SK-N-SH (cell line): ENCODE measurements at regions of chr2 and their contacts with region 1.

Region 1: GRCh38 chr2:11716689-11717321 is 29.6 kb upstream of the LPIN1 start:
- DNase-seq: no peak
- H3K4me3 ChIP-seq: no peak overlapping the region
- H3K27ac ChIP-seq: no peak overlapping the region
- H3K4me1 ChIP-seq: peaks cover 0 to 51% of the 10 kb centered on the region in 2 experiments; a peak in 2 of 4 replicates
- H3K27me3 ChIP-seq: peaks cover 23% of the 10 kb centered on the region; the same call in 1 of the 2 replicates
- CTCF ChIP-seq: no peak
- EP300 ChIP-seq: no peak
- RAD21 ChIP-seq: no peak

Region 2: DNA sequence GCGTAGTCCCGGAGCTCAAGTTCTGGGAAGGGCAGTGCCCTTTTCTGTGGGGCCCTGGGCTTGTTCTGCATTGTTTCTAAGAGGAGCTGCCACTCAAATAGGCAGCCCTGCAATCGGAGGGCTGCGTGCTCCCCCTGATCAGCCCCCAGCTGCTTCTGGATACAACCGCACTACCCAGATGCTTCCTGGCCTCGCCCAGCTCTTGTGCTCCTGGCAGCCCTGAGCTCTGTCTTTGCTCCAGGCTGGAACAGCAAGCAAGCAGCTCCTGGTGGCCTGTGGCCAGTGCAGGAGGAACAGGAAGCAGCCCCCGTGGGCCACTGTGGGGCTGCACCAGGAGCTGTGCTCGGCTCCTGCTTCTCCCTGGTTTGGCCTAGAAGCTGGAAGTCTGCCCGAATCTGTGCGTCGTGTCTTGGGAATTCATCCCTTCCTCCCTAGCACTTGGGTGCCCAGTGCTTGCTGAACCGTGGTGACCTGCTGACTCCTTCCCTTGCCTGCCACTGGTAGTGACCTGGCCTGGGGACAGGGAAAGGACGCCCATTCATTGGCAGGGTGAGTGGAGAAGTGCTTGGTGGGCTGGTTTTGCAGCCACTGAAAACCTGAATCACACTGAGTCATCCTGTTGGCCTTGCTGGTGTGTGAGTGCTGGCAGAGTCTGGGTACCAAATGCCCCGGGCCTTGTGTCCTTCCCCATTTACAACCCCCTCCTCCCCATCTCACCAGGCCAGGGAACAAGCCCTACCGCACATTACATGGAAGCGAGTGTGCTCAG is 19.5 kb before region 1 on chr2:
- CTCF ChIA-PET with region 1: interaction called, 130 read pairs
- POLR2A ChIA-PET with region 1: interaction called, 16 read pairs
- DNase-seq: peak; percentile 82
- H3K4me3 ChIP-seq: no peak overlapping the region
- H3K27ac ChIP-seq: peak overlapping the region; percentile 56 to 83
- H3K4me1 ChIP-seq: peaks cover 14 to 46% of the 10 kb centered on the region in 2 experiments; a peak in 3 of 4 replicates
- H3K27me3 ChIP-seq: no peaks in the 10 kb centered on the region
- CTCF ChIP-seq: no peak
- EP300 ChIP-seq: peak in 1 of 2 experiments; percentile 31; a peak in 1 of 4 replicates
- RAD21 ChIP-seq: no peak; the same call in 1 of the 2 replicates

Region 3: GRCh38 chr2:11703700-11704099 is 13.1 kb before region 1 on chr2:
- CTCF ChIA-PET with region 1: interaction called, 130 read pairs
- POLR2A ChIA-PET with region 1: interaction called, 7 read pairs
- DNase-seq: no peak
- H3K4me3 ChIP-seq: no peak overlapping the region
- H3K27ac ChIP-seq: no peak overlapping the region
- H3K4me1 ChIP-seq: peaks cover 7 to 15% of the 10 kb centered on the region in 2 experiments; a peak in 2 of 4 replicates
- H3K27me3 ChIP-seq: no peaks in the 10 kb centered on the region
- CTCF ChIP-seq: no peak
- EP300 ChIP-seq: no peak
- RAD21 ChIP-seq: no peak

Region 4: DNA sequence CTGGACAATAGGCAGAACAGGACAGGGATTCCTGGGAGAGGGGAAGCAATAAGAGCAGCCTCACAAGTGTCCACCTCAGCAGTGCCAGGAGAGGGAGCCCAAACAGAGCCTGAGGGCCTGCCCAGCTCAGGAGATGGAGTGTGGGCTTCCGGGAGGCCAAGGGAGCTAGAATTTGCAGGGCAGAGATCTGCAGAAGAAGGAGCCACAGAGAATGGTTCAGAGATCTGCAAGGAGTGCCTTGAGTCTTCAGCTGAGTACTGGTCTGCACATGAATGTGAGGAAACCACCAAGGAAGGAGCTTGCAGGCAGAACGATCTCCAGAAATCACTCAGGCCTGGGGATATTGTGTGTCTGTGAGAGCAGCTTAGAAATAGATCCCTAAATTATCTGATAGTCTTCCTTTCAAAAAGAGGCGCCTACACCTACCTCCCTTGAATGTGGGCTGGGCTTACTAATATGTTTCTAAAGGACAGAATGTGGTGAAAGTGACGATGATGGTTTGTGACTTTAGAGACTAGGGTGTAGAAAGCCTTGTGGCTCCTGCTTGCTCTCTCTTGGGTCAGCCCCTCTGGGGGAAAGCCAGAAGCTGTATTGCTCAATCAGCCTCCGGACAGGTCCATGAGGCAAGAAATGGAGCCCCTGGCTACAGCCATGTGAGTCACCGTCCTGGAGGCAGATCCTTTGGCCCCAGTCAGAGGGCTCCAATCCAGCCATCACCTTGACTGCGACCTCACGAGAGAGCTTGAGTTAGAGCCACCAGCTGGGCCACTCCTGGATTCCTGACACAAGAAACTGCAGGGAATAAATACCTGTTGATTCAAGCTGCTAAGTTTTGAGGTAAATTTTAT is 22.0 kb after region 1 on chr2:
- CTCF ChIA-PET with region 1: interaction called, 31 read pairs
- POLR2A ChIA-PET with region 1: interaction called, 7 read pairs
- DNase-seq: peak; percentile 64
- H3K4me3 ChIP-seq: no peak overlapping the region
- H3K27ac ChIP-seq: no peak overlapping the region
- H3K4me1 ChIP-seq: peaks cover 12 to 18% of the 10 kb centered on the region in 2 experiments; a peak in 3 of 4 replicates
- H3K27me3 ChIP-seq: no peaks in the 10 kb centered on the region; the same call in 1 of the 2 replicates
- CTCF ChIP-seq: peak; percentile 67
- EP300 ChIP-seq: no peak
- RAD21 ChIP-seq: peak; percentile 73